Heart right ventricle (tissue), 16 donors: ENCODE measurements at regions of chr7 and their contacts with region 1.

Region 1: GRCh38 chr7:129210256-129210988 is 14.4 kb upstream of the AHCYL2 start:
- DNase-seq: peak; percentile 78 to 87
- ATAC-seq: peak; percentile 87 to 95 (median 89)
- H3K4me3 ChIP-seq: no peak overlapping the region
- H3K27ac ChIP-seq: no peak overlapping the region
- H3K4me1 ChIP-seq: peaks cover 0 to 5% (median 0%) of the 10 kb centered on the region in 9 donors
- H3K27me3 ChIP-seq: no peaks in the 10 kb centered on the region
- CTCF ChIP-seq: peak; percentile 62 to 93 (median 85)

Region 2: GRCh38 chr7:128681794-128682537 is 528.5 kb before region 1 on chr7:
- intact Hi-C with region 1: no loop called
- DNase-seq: no peak
- ATAC-seq: no peak
- H3K4me3 ChIP-seq: no peak overlapping the region
- H3K27ac ChIP-seq: no peak overlapping the region
- H3K4me1 ChIP-seq: no peaks in the 10 kb centered on the region
- H3K27me3 ChIP-seq: no peaks in the 10 kb centered on the region
- CTCF ChIP-seq: no peak

Region 3: GRCh38 chr7:129144095-129144833 is 66.2 kb before region 1 on chr7 and contains the start of gene TSPAN33:
- intact Hi-C with region 1: no loop called
- DNase-seq: peak; percentile 72 to 81
- ATAC-seq: peak; percentile 79 to 95 (median 93)
- H3K4me3 ChIP-seq: peak within 1 kb of the TSS; percentile 38 to 67 (median 60)
- H3K27ac ChIP-seq: peak within 1 kb of the TSS in 1 of 10 donors; percentile 58
- H3K4me1 ChIP-seq: peaks cover 0 to 46% (median 12%) of the 10 kb centered on the region in 9 donors
- H3K27me3 ChIP-seq: peaks cover 0 to 48% (median 24%) of the 10 kb centered on the region in 7 donors
- CTCF ChIP-seq: no peak
- total RNA-seq, gene TSPAN33: 6.8 to 13.1 (median 9.0) TPM

Region 4: DNA sequence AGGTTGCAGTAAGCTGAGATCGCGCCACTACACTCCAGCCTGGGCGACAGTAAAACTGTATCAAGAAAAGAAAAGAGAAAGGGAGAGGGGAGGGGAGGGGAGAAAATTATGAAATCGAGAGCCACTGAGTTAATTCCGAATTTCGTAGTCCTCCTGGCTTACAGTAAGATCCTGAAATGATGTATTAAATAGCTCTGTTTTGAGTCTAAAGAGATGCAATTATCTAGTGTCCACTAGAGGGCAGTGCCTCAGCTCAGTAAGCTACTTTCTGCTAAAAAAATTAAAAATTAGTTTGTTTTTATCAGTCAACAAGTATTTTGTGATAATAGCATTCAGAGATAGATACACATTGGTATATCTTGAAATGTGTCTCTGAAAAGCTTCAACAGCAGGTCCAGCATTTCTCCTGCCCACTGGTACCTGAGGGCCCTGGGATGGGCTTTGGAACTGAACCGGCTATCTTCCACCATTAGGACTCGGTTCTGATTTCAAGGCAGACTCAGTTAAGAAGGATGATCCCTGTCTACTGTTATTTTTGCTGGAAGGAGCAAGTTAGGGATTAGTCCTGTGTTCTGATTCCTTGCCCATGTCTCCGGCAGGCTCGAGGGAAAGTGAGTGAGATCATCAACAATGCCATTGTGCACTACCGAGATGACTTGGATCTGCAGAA is 46.4 kb before region 1 on chr7:
- intact Hi-C with region 1: loop called (anchors 2 to 5 kb)
- DNase-seq: no peak
- ATAC-seq: no peak
- H3K4me3 ChIP-seq: no peak overlapping the region
- H3K27ac ChIP-seq: no peak overlapping the region
- H3K4me1 ChIP-seq: peaks cover 0 to 13% (median 2%) of the 10 kb centered on the region in 9 donors
- H3K27me3 ChIP-seq: peaks cover 0 to 3% (median 0%) of the 10 kb centered on the region in 7 donors
- CTCF ChIP-seq: peak; percentile 63 to 88 (median 86)

Region 5: GRCh38 chr7:129169171-129169671 is 41.2 kb before region 1 on chr7:
- intact Hi-C with region 1: loop called (anchors 2 to 5 kb)
- DNase-seq: peak; percentile 48 to 68
- ATAC-seq: peak; percentile 84 to 92 (median 88)
- H3K4me3 ChIP-seq: peak overlapping the region; percentile 28 to 60 (median 55)
- H3K27ac ChIP-seq: peak overlapping the region in 7 of 10 donors; percentile 10 to 70 (median 55)
- H3K4me1 ChIP-seq: peaks cover 0 to 19% (median 10%) of the 10 kb centered on the region in 9 donors
- H3K27me3 ChIP-seq: peaks cover 0 to 8% (median 0%) of the 10 kb centered on the region in 7 donors
- CTCF ChIP-seq: no peak

Region 6: GRCh38 chr7:129388333-129389098 is 178.1 kb after region 1 on chr7:
- intact Hi-C with region 1: no loop called
- DNase-seq: no peak
- ATAC-seq: no peak
- H3K4me3 ChIP-seq: no peak overlapping the region
- H3K27ac ChIP-seq: no peak overlapping the region
- H3K4me1 ChIP-seq: peaks cover 0 to 26% (median 4%) of the 10 kb centered on the region in 9 donors
- H3K27me3 ChIP-seq: no peaks in the 10 kb centered on the region
- CTCF ChIP-seq: no peak